ENCODE measurements at regions of chr2 and their contacts with region 1.

Region 1: DNA sequence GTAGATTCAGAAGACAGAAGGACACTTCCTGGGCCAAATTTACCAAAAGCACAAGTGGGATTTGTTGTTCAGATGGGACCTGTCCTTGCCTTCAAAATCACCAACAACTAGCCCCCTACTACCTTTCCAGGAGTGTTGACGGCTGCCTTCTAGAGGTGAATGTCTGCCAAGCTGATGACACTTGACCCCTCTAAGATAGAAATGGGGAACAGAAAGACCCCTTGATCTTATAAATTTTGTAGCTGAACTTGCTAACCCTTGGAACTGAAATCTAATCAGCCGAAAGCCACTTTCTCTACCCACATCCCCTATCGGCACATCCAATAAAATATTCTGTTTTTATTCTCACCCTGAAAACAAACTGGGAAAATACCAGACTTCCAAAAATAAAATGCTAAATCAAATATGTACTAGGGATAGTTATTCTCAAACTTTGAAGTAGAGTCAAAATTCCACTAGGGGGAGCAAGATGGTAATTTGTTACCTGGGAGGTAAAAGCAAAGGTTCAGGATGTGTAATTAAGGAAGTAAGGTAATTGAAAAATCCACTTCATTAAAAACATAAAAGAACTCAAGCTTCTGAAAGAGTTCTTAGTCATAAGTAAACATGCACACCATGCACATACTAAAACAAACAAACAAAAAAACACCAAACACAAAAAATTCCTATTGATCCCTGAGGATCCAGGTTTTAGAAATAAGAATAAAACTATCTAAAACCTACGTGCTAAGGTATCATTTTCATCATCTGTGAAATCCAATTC is 119.2 kb downstream of the ANKRD44 start:
- DNase-seq: no peak
- H3K4me3 ChIP-seq: no peak overlapping the region
- H3K27ac ChIP-seq: no peak overlapping the region
- H3K4me1 ChIP-seq: peaks cover 0 to 6% (median 2%) of the 10 kb centered on the region in 4 experiments; a peak in 1 of 7 replicates
- H3K27me3 ChIP-seq: no peaks in the 10 kb centered on the region
- CTCF ChIP-seq: peak in 2 of 3 experiments; percentile 36 to 45; a peak in 2 of 4 replicates
- EP300 ChIP-seq: no peak
- POLR2A ChIP-seq: no peak
- RAD21 ChIP-seq: peak; percentile 59 to 68

Region 2: DNA sequence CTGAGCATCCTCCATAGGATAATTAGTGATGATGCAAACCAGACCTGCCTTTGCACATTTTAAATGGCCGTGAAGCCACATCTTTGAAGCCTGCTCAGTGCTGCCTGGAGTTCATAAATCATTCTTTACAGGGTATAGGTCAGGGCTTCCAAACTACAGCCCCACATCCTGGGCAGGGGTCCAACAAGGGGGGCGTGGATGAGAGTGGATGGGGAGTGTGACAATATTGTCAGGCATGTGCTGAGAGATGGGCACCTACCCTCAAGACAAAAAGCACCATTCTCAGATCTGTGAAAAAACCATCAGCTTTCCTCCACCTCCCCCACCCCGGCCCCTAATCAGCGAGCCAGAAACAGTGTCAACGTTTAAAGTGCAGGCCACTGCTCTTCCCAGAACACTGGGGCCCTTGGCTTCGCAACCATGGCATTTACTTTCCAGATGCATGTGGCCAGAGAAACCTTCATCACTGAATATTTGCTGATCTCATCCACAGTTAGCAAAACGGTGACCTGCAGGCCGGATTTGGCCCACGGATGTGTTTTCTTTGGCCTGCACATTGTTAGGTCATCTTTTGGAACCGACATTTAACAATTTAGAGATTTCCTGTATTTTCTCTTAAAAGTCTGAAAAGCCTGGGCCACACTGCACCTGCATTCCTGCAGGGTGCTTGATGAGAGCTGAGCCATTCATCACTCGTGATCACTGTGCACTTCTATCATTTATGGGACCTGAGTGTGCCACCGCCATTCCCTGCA is 11.4 kb before region 1 on chr2:
- CTCF ChIA-PET with region 1: interaction called, 18 read pairs
- POLR2A ChIA-PET with region 1: no interaction called
- DNase-seq: no peak
- H3K4me3 ChIP-seq: no peak overlapping the region
- H3K27ac ChIP-seq: no peak overlapping the region
- H3K4me1 ChIP-seq: no peaks in the 10 kb centered on the region
- H3K27me3 ChIP-seq: no peaks in the 10 kb centered on the region
- CTCF ChIP-seq: no peak
- EP300 ChIP-seq: no peak
- POLR2A ChIP-seq: no peak
- RAD21 ChIP-seq: no peak

Region 3: DNA sequence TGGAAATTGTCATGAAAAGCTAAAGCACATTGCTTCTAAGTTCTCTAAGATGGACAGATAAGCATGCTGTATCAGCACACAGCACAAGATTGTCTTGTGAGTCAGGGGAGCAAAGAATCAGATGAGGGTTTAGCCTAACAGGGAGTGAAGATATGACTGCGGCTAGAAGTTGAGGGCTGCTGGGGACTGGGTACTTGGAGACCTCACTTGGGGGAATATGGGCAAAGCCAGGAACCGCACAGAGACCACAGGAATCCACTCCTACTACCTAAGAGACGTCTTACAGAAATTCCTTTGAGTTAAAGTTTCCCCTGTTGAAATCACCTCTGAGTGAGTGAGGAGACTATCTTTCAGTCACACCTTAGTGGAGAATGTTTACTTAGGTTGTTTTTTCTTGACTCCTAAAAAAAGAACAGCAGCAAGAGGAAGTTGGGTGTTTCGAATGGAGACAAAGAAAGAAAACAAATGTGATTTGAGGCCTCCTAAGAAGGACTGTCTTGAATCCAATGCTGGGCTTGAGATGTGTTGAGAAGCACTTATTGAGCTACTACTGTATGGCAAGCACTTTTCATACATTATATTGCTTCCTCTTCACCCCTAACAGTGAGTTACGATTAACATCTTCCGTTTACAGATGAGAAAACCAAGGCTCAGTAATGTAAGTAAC is 18.5 kb after region 1 on chr2:
- CTCF ChIA-PET with region 1: interaction called, 63 read pairs
- POLR2A ChIA-PET with region 1: no interaction called
- DNase-seq: no peak
- H3K4me3 ChIP-seq: no peak overlapping the region
- H3K27ac ChIP-seq: no peak overlapping the region
- H3K4me1 ChIP-seq: no peaks in the 10 kb centered on the region
- H3K27me3 ChIP-seq: peaks cover 0 to 1% (median 0%) of the 10 kb centered on the region in 4 experiments; a peak in 1 of 7 replicates
- CTCF ChIP-seq: no peak
- EP300 ChIP-seq: no peak
- POLR2A ChIP-seq: no peak
- RAD21 ChIP-seq: no peak

Region 4: GRCh38 chr2:197255543-197255942 is 64.2 kb after region 1 on chr2:
- CTCF ChIA-PET with region 1: no interaction called
- POLR2A ChIA-PET with region 1: no interaction called
- DNase-seq: no peak
- H3K4me3 ChIP-seq: no peak overlapping the region
- H3K27ac ChIP-seq: no peak overlapping the region
- H3K4me1 ChIP-seq: no peaks in the 10 kb centered on the region
- H3K27me3 ChIP-seq: no peaks in the 10 kb centered on the region; a peak in 1 of 7 replicates
- CTCF ChIP-seq: no peak
- EP300 ChIP-seq: no peak
- POLR2A ChIP-seq: no peak
- RAD21 ChIP-seq: no peak

Region 5: GRCh38 chr2:197310271-197310985 is 119.1 kb after region 1 on chr2 and contains the start of gene ANKRD44:
- CTCF ChIA-PET with region 1: interaction called, 14 read pairs
- POLR2A ChIA-PET with region 1: no interaction called
- DNase-seq: peak; percentile 33 to 83
- H3K4me3 ChIP-seq: peak within 1 kb of the TSS; percentile 44 to 80 (median 66)
- H3K27ac ChIP-seq: no peak within 1 kb of the TSS
- H3K4me1 ChIP-seq: peaks cover 0 to 5% (median 3%) of the 10 kb centered on the region in 4 experiments; a peak in 4 of 7 replicates
- H3K27me3 ChIP-seq: peaks cover 9 to 34% (median 16%) of the 10 kb centered on the region in 4 experiments
- CTCF ChIP-seq: peak; percentile 37 to 67 (median 57)
- EP300 ChIP-seq: no peak
- POLR2A ChIP-seq: no peak
- RAD21 ChIP-seq: peak; percentile 53 to 62
- total RNA-seq, gene ANKRD44: 1.3 TPM in 2 replicates

Region 6: DNA sequence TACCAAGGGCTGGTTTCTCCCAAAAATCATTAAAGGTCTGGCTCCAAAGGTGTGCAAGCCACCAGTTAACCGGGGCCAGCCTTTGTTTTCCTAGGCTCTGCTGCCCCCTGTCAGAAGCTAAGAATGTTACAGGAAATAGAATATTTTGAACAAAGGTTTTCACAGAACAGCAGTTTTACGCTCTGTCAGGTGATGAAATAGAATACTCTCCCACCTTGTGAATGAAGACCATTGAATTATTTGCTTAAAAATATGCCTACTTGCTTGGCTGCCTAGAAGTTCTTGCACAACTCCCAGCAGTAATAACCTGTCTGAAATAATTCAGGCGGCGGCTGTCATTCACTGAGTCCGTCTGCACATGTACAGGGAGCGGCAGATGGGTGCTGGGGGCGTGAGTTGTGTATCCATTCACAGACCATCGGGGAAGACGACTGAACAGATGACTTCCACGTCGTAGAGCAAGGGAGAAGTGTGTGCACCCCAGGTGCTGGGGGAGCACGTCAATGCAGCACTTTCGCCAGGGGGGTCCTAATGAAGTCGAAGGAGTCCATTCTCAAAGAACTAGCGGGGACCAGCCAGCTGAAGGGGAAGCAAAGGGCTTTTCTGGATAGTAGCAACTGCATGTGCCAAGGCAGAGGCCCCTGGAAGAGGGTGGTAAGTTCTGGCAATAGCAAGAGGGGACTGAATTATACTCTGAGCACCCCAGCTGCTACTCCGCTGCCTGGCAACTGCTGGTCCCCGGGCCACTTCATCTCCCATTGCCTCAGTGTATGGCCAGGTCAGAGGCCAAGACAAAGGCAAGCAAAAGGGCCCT is 187.3 kb after region 1 on chr2:
- CTCF ChIA-PET with region 1: interaction called, 18 read pairs
- POLR2A ChIA-PET with region 1: no interaction called
- DNase-seq: peak in 1 of 2 experiments; percentile 70
- H3K4me3 ChIP-seq: no peak overlapping the region
- H3K27ac ChIP-seq: no peak overlapping the region
- H3K4me1 ChIP-seq: no peaks in the 10 kb centered on the region
- H3K27me3 ChIP-seq: no peaks in the 10 kb centered on the region
- CTCF ChIP-seq: peak; percentile 36 to 86 (median 75)
- EP300 ChIP-seq: no peak
- POLR2A ChIP-seq: no peak
- RAD21 ChIP-seq: peak; percentile 97